ENCODE measurements at regions of chr11 and their contacts with region 1.

Region 1: GRCh38 chr11:11909727-11910126 is 68.0 kb downstream of the USP47 start:
- DNase-seq: no peak
- H3K4me3 Mint-ChIP-seq: no peak overlapping the region
- H3K27ac Mint-ChIP-seq: no peak overlapping the region
- H3K4me1 Mint-ChIP-seq: no peaks in the 10 kb centered on the region
- H3K27me3 Mint-ChIP-seq: no peaks in the 10 kb centered on the region
- CTCF ChIP-seq: no peak

Region 2: GRCh38 chr11:11895672-11896071 is 14.1 kb before region 1 on chr11:
- CTCF ChIA-PET with region 1: no interaction called
- intact Hi-C with region 1: no loop called
- DNase-seq: no peak
- H3K4me3 Mint-ChIP-seq: no peak overlapping the region
- H3K27ac Mint-ChIP-seq: no peak overlapping the region
- H3K4me1 Mint-ChIP-seq: peaks cover 6% of the 10 kb centered on the region
- H3K27me3 Mint-ChIP-seq: no peaks in the 10 kb centered on the region
- CTCF ChIP-seq: peak; percentile 1

Region 3: GRCh38 chr11:11944444-11944843 is 34.7 kb after region 1 on chr11:
- CTCF ChIA-PET with region 1: no interaction called
- intact Hi-C with region 1: loop called (anchors 5 kb)
- DNase-seq: no peak
- H3K4me3 Mint-ChIP-seq: no peak overlapping the region
- H3K27ac Mint-ChIP-seq: no peak overlapping the region
- H3K4me1 Mint-ChIP-seq: no peaks in the 10 kb centered on the region
- H3K27me3 Mint-ChIP-seq: no peaks in the 10 kb centered on the region
- CTCF ChIP-seq: no peak

Measured in Calu3 (cell line).